Naive thymus-derived CD4-positive, alpha-beta T cell (primary cell): ENCODE measurements at regions of chr11 and their contacts with region 1.

Region 1: DNA sequence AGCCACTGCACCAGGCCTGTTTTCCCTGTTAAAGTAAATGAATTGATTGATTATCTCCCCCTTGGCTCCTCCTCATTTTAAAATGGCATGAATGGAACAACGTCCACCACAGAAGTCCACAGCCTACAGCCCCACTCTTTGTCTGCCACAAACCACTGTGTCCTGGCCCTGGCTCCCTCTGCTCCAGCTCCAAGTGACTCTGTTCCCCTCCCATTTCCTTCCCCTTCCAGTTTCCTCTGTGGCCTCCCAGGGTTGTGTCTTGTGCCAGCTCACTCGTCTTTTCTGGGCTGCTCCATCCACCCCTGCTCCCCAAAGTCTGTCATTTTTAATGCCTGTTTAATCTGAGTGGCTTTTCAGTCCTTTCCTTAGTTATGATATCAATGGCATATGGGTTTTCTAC is 52.4 kb upstream of the CD5 start:
- DNase-seq: no peak
- ATAC-seq: no peak
- H3K4me3 ChIP-seq: no peak overlapping the region
- H3K4me3 Mint-ChIP-seq: peak overlapping the region in 4 of 10 donors; percentile 18 to 51 (median 34)
- H3K27ac ChIP-seq: no peak overlapping the region
- H3K27ac Mint-ChIP-seq: peak overlapping the region in 8 of 9 donors; percentile 10 to 90 (median 76)
- H3K4me1 ChIP-seq: peaks cover 0 to 37% of the 10 kb centered on the region in 2 donors
- H3K4me1 Mint-ChIP-seq: peaks cover 28 to 75% (median 69%) of the 10 kb centered on the region in 7 donors
- H3K27me3 ChIP-seq: no peaks in the 10 kb centered on the region
- H3K27me3 Mint-ChIP-seq: no peaks in the 10 kb centered on the region

Region 2: DNA sequence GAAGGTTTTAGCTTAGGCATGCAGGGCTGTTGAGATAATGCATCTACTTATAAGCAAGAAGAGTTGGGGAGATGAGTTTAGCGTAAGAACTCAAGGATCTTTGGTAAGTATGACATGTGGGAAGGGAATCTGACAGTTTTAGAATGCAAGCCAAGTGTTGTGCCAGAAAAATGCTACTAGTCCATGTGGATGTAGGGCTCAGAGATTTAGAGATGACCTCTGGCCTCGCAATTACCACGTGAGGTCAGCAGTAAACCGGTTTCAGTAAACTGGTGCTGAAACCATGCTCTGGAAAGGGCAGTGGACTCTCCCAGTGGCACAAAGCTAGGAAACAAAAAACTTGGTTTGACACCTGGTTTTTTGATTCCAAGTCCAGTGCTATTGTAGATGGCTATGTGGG is 1258.2 kb before region 1 on chr11:
- CTCF ChIA-PET with region 1: no interaction called
- POLR2A ChIA-PET with region 1: no interaction called
- intact Hi-C with region 1: no loop called
- DNase-seq: no peak
- ATAC-seq: no peak
- H3K4me3 ChIP-seq: no peak overlapping the region
- H3K4me3 Mint-ChIP-seq: no peak overlapping the region
- H3K27ac ChIP-seq: no peak overlapping the region
- H3K27ac Mint-ChIP-seq: no peak overlapping the region
- H3K4me1 ChIP-seq: no peaks in the 10 kb centered on the region
- H3K4me1 Mint-ChIP-seq: peaks cover 0 to 16% (median 0%) of the 10 kb centered on the region in 7 donors
- H3K27me3 ChIP-seq: no peaks in the 10 kb centered on the region
- H3K27me3 Mint-ChIP-seq: no peaks in the 10 kb centered on the region

Region 3: GRCh38 chr11:60810569-60810968 is 239.3 kb before region 1 on chr11:
- CTCF ChIA-PET with region 1: no interaction called
- POLR2A ChIA-PET with region 1: no interaction called
- intact Hi-C with region 1: no loop called
- DNase-seq: no peak
- ATAC-seq: no peak
- H3K4me3 ChIP-seq: no peak overlapping the region
- H3K4me3 Mint-ChIP-seq: no peak overlapping the region
- H3K27ac ChIP-seq: no peak overlapping the region
- H3K27ac Mint-ChIP-seq: peak overlapping the region in 1 of 9 donors; percentile 28
- H3K4me1 ChIP-seq: no peaks in the 10 kb centered on the region
- H3K4me1 Mint-ChIP-seq: peaks cover 0 to 10% (median 0%) of the 10 kb centered on the region in 7 donors
- H3K27me3 ChIP-seq: no peaks in the 10 kb centered on the region
- H3K27me3 Mint-ChIP-seq: peaks cover 0 to 13% (median 0%) of the 10 kb centered on the region in 5 donors

Region 4: GRCh38 chr11:60978546-60979380 is 71.1 kb before region 1 on chr11:
- CTCF ChIA-PET with region 1: interaction called, 3 read pairs
- POLR2A ChIA-PET with region 1: interaction called, 4 read pairs
- intact Hi-C with region 1: loop called in 1 of 2 experiments (anchors 2 kb)
- DNase-seq: peak in 2 of 9 donors; percentile 56 to 79
- ATAC-seq: peak; percentile 40
- H3K4me3 ChIP-seq: peak overlapping the region; percentile 48
- H3K4me3 Mint-ChIP-seq: peak overlapping the region; percentile 80 to 93 (median 86)
- H3K27ac ChIP-seq: peak overlapping the region; percentile 96
- H3K27ac Mint-ChIP-seq: peak overlapping the region; percentile 91 to 100 (median 97)
- H3K4me1 ChIP-seq: peaks cover 64 to 83% of the 10 kb centered on the region in 2 donors
- H3K4me1 Mint-ChIP-seq: peaks cover 34 to 87% (median 80%) of the 10 kb centered on the region in 7 donors
- H3K27me3 ChIP-seq: no peaks in the 10 kb centered on the region
- H3K27me3 Mint-ChIP-seq: no peaks in the 10 kb centered on the region

Region 5: GRCh38 chr11:61021661-61022212 is 28.1 kb before region 1 on chr11:
- CTCF ChIA-PET with region 1: interaction called, 4 read pairs
- POLR2A ChIA-PET with region 1: interaction called, 210 read pairs
- intact Hi-C with region 1: no loop called
- DNase-seq: peak; percentile 72 to 98 (median 96)
- ATAC-seq: peak; percentile 91
- H3K4me3 ChIP-seq: peak overlapping the region; percentile 53
- H3K4me3 Mint-ChIP-seq: peak overlapping the region; percentile 68 to 90 (median 81)
- H3K27ac ChIP-seq: peak overlapping the region; percentile 82
- H3K27ac Mint-ChIP-seq: peak overlapping the region; percentile 88 to 100 (median 98)
- H3K4me1 ChIP-seq: peaks cover 49 to 56% of the 10 kb centered on the region in 2 donors
- H3K4me1 Mint-ChIP-seq: peaks cover 40 to 79% (median 76%) of the 10 kb centered on the region in 7 donors
- H3K27me3 ChIP-seq: no peaks in the 10 kb centered on the region
- H3K27me3 Mint-ChIP-seq: no peaks in the 10 kb centered on the region

Region 6: DNA sequence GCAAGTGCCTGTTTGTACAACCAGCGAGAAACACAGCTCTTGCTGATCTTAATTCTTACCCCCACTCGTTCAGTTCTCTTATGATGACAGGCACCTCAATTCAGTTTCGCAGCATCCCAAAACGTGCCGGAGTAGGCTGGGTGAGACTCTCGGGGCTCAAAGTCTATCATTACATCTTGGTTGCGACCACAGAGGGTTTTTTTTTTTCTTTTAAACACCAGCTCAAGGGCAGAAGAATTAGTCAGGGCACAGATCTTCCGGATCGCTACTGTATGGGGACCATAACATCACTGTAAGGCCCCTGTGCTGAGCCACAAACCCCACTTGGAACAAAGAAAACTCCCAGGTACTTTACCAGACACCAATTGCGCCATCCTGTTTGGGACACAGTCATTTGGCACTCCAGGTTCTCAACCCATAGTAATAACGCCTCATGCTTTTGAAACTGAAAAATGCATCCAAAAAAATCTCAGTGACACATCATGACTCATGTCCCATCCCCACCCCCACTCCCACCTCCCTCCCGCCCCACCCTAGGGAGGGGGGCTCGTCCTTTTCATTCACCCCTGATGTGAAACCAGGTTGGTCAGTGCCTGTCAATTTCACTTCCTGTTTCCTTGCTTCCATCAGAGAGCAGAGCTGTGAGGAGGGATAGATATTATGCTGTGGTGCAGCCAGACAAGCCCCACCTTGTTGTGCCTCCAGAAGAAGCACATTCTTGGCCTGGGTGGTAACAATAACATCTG is 11.4 kb after region 1 on chr11:
- CTCF ChIA-PET with region 1: interaction called, 4 read pairs
- POLR2A ChIA-PET with region 1: interaction called, 222 read pairs
- intact Hi-C with region 1: loop called in 1 of 2 experiments (anchors 1 kb)
- DNase-seq: peak in 7 of 9 donors; percentile 47 to 89 (median 56)
- ATAC-seq: peak; percentile 86
- H3K4me3 ChIP-seq: peak overlapping the region; percentile 34
- H3K4me3 Mint-ChIP-seq: peak overlapping the region; percentile 75 to 94 (median 83)
- H3K27ac ChIP-seq: peak overlapping the region; percentile 72
- H3K27ac Mint-ChIP-seq: peak overlapping the region; percentile 88 to 99 (median 96)
- H3K4me1 ChIP-seq: peaks cover 24 to 48% of the 10 kb centered on the region in 2 donors
- H3K4me1 Mint-ChIP-seq: peaks cover 47 to 83% (median 80%) of the 10 kb centered on the region in 7 donors
- H3K27me3 ChIP-seq: no peaks in the 10 kb centered on the region
- H3K27me3 Mint-ChIP-seq: no peaks in the 10 kb centered on the region

Region 7: GRCh38 chr11:61071208-61071681 is 21.4 kb after region 1 on chr11:
- CTCF ChIA-PET with region 1: interaction called, 5 read pairs
- POLR2A ChIA-PET with region 1: interaction called, 222 read pairs
- intact Hi-C with region 1: no loop called
- DNase-seq: peak in 8 of 9 donors; percentile 56 to 78 (median 71)
- ATAC-seq: peak; percentile 96
- H3K4me3 ChIP-seq: peak overlapping the region; percentile 21
- H3K4me3 Mint-ChIP-seq: peak overlapping the region; percentile 65 to 87 (median 76)
- H3K27ac ChIP-seq: peak overlapping the region; percentile 76
- H3K27ac Mint-ChIP-seq: peak overlapping the region; percentile 92 to 97 (median 97)
- H3K4me1 ChIP-seq: peaks cover 41 to 81% of the 10 kb centered on the region in 2 donors
- H3K4me1 Mint-ChIP-seq: peaks cover 69 to 99% (median 91%) of the 10 kb centered on the region in 7 donors
- H3K27me3 ChIP-seq: no peaks in the 10 kb centered on the region
- H3K27me3 Mint-ChIP-seq: peaks cover 0 to 4% (median 0%) of the 10 kb centered on the region in 5 donors

Region 8: GRCh38 chr11:62823677-62824076 is 1773.8 kb after region 1 on chr11:
- CTCF ChIA-PET with region 1: no interaction called
- POLR2A ChIA-PET with region 1: no interaction called
- intact Hi-C with region 1: no loop called
- DNase-seq: no peak
- ATAC-seq: no peak
- H3K4me3 ChIP-seq: no peak overlapping the region
- H3K4me3 Mint-ChIP-seq: no peak overlapping the region
- H3K27ac ChIP-seq: no peak overlapping the region
- H3K27ac Mint-ChIP-seq: peak overlapping the region in 1 of 9 donors; percentile 52
- H3K4me1 ChIP-seq: no peaks in the 10 kb centered on the region
- H3K4me1 Mint-ChIP-seq: peaks cover 3 to 25% (median 11%) of the 10 kb centered on the region in 7 donors
- H3K27me3 ChIP-seq: no peaks in the 10 kb centered on the region
- H3K27me3 Mint-ChIP-seq: no peaks in the 10 kb centered on the region